ENCODE measurements at regions of chr14 and their contacts with region 1.

Region 1: GRCh38 chr14:50003213-50004031 is 110.5 kb downstream of the ARF6 start:
- DNase-seq: peak; percentile 92
- ATAC-seq: peak; percentile 83

Region 2: DNA sequence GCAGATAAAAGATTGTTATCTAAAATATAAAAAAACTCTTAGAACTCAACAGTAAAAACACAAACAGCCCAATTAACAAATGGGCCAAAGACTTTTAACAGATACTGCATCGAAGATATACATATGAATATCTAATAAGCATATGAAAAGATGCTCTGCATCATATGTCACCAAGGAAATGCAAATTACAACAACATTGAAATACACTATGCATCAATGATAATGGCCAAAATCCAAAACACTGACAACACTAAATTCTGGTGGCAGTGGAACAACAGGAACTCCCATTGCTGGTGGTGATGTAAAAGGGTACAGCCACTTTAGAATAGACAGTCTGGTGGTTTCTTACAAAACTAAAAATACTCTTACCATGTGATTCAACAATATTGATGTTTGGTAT is 194.6 kb before region 1 on chr14:
- intact Hi-C with region 1: no loop called
- DNase-seq: no peak
- ATAC-seq: no peak

Region 3: GRCh38 chr14:49892636-49893308 is 110.7 kb before region 1 on chr14 and contains the start of gene ARF6:
- intact Hi-C with region 1: loop called (anchors 5 kb)
- DNase-seq: peak; percentile 100
- ATAC-seq: peak; percentile 98
- total RNA-seq, gene ARF6: 23.8 TPM